ENCODE measurements at regions of chr6 and their contacts with region 1.

Region 1: GRCh38 chr6:17803409-17803808 is 96.7 kb upstream of the NUP153 start:
- DNase-seq: no peak
- H3K4me3 ChIP-seq: no peak overlapping the region
- CTCF ChIP-seq: no peak

Region 2: GRCh38 chr6:17584241-17584803 is 219.1 kb before region 1 on chr6:
- CTCF ChIA-PET with region 1: interaction called, 39 read pairs
- POLR2A ChIA-PET with region 1: no interaction called
- DNase-seq: no peak
- H3K4me3 ChIP-seq: no peak overlapping the region; the same call in 1 of the 2 replicates
- CTCF ChIP-seq: peak; percentile 68

Region 3: DNA sequence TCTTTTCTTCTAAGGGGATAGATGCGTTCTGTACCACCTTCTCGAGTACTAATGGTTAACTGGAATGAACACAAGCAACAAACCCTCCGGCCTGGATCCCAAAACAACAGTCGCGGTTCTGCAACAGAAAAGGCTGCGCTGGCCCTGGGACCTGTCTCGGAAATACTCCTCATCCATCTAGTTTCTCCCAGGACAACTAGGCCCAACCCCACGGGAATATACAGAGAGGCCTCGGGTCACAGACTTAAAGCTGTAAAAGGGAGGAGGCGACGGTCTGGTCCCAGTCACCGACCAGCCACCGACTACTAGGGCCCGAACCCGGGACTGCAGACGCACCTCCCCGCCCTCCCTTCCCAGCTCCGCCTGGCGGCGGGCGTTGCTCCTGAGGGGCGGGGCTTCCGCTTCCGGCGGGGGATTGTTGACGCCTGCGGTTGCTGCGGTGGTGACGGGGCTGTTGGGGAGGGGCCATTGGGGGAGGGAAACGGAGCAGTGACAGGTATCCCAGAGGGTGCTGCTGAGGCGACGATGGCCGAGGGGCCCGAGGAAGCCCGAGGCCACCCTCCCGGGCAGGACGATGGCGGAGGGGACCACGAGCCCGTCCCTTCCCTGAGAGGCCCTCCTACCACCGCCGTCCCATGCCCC is 203.4 kb before region 1 on chr6 and contains the start of gene FAM8A1:
- CTCF ChIA-PET with region 1: interaction called, 13 read pairs
- POLR2A ChIA-PET with region 1: no interaction called
- DNase-seq: no peak
- H3K4me3 ChIP-seq: peak within 1 kb of the TSS; percentile 91
- CTCF ChIP-seq: peak; percentile 73

Region 4: GRCh38 chr6:17790489-17790888 is 12.9 kb before region 1 on chr6:
- CTCF ChIA-PET with region 1: interaction called, 46 read pairs
- POLR2A ChIA-PET with region 1: no interaction called
- DNase-seq: no peak
- H3K4me3 ChIP-seq: no peak overlapping the region
- CTCF ChIP-seq: no peak

Region 5: DNA sequence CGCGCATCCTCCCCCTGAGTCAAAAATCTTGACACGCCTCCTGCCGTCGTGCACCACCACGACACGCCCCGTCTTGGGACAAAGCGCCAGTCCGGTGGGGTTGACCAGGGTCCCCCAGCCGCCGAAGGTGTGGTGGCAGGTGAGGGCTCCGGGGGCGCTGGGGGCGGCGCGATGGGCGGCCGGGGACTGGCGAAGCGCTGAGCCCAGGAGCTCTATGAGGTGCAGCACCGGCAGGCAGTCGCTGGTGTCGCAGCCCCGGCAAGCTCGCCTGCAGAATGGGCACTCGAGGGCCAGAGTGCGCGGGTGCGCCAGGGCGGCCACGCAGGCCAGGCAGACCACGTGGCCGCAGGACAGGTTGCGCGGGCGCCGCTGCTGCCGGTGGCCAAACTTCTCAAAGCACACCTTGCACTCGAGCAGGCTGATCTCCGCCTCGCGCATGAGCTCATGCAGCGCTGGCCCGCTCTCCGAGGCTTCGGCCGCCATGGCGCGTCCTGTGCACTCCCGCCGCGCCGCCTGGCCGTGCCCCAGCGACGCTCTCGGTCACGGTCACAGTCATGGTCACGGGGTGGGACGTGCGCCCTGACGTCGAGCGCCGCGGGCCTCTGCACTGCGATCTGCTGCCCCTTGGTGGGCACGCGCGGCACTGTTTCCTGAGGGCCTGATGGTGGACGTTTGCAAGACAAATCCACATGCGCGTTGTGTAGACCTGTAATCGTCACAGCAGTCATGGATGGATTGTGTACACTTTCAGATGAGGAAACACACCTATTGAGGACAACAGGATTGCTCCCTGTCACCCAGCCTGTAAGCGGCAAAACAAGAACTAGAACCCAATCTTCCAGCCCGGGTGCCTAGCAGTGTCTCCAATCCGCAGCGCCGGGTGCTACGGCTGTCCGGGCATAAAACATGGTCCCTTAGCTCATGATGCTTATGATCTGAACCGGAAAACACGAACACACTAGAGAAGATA is 319.0 kb after region 1 on chr6 and contains the start of gene NHLRC1:
- CTCF ChIA-PET with region 1: interaction called, 20 read pairs
- POLR2A ChIA-PET with region 1: no interaction called
- DNase-seq: no peak
- H3K4me3 ChIP-seq: peak within 1 kb of the TSS; percentile 62
- CTCF ChIP-seq: peak; percentile 97